Lower lobe of right lung (tissue), 2 donors: ENCODE measurements at regions of chr6 and their contacts with region 1.

Region 1: GRCh38 chr6:30678964-30679726 is 6.3 kb upstream of the DHX16 start:
- DNase-seq: peak; percentile 91
- ATAC-seq: peak; percentile 87
- H3K4me3 ChIP-seq: peak overlapping the region; percentile 81
- H3K27ac ChIP-seq: peak overlapping the region; percentile 19
- H3K4me1 ChIP-seq: peaks cover 40% of the 10 kb centered on the region
- H3K27me3 ChIP-seq: no peaks in the 10 kb centered on the region
- CTCF ChIP-seq: peak; percentile 97

Region 2: GRCh38 chr6:30418448-30418847 is 260.7 kb before region 1 on chr6:
- intact Hi-C with region 1: no loop called
- DNase-seq: no peak
- ATAC-seq: no peak
- H3K4me3 ChIP-seq: no peak overlapping the region
- H3K27ac ChIP-seq: no peak overlapping the region
- H3K4me1 ChIP-seq: no peaks in the 10 kb centered on the region
- H3K27me3 ChIP-seq: peaks cover 25% of the 10 kb centered on the region
- CTCF ChIP-seq: no peak

Region 3: GRCh38 chr6:30719791-30720737 is 40.9 kb after region 1 on chr6 and contains the start of gene TUBB:
- intact Hi-C with region 1: loop called (anchors 5 kb)
- DNase-seq: peak; percentile 98
- ATAC-seq: peak; percentile 83 to 88
- H3K4me3 ChIP-seq: peak within 1 kb of the TSS; percentile 93
- H3K27ac ChIP-seq: peak within 1 kb of the TSS; percentile 94
- H3K4me1 ChIP-seq: peaks cover 54% of the 10 kb centered on the region
- H3K27me3 ChIP-seq: no peaks in the 10 kb centered on the region
- CTCF ChIP-seq: no peak
- total RNA-seq, gene TUBB: 292 TPM